ENCODE measurements at regions of chr1 and their contacts with region 1.

Region 1: GRCh38 chr1:77683160-77684148 is 996 bp upstream of the ZZZ3 start:
- DNase-seq: peak; percentile 81 to 94 (median 90)
- H3K4me3 ChIP-seq: peak overlapping the region; percentile 52 to 98 (median 87)
- H3K27ac ChIP-seq: peak overlapping the region; percentile 83 to 100 (median 99)
- H3K27me3 ChIP-seq: no peaks in the 10 kb centered on the region
- CTCF ChIP-seq: peak; percentile 58 to 96 (median 88)

Region 2: GRCh38 chr1:77143529-77144121 is 539.8 kb before region 1 on chr1:
- intact Hi-C with region 1: loop called (anchors 2 kb)
- DNase-seq: no peak
- H3K4me3 ChIP-seq: no peak overlapping the region
- H3K27ac ChIP-seq: no peak overlapping the region
- H3K27me3 ChIP-seq: no peaks in the 10 kb centered on the region
- CTCF ChIP-seq: peak in 54 of 56 donors; percentile 3 to 72 (median 52)

Region 3: DNA sequence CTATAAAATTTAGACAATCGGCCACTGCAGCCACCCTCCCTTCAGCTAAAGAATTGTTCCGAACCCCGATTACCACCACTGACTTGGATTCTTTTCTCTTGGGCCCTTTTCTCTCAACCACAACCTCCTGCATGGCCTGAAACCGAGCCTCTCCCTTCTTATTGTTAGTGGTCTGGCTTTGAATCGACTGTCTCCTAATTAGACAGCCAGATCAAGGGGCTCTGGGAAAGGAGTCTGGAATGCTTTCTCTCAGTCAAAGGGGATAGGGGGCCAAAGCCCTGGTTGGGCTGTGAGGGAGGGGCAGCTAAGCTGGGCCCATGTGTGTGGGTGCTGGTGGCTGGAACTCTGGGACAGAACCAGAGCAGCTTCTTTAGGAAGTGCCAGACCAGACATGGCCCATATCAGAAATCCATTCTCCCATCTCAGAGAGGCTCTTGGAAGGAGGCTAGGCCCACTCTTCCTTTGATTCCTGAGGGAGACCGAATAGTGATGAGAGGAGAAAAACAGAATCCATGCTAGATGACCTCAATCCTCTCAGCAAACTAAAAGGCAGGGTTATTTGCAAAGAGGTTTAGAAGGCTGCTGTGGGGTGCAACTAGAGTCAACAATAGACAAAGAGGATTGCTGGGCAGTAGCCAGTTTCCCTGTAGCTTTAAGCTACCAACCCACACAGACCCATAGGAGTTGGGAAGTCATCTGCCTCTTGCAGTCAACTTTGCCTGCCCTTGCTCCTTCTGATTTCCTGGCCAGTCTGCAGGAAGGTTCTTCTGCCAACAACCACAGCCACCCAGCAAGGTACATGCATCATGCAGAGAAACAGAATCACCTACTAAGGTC is 284.0 kb before region 1 on chr1:
- intact Hi-C with region 1: loop called (anchors 5 kb)
- DNase-seq: peak in 4 of 10 donors; percentile 53 to 72 (median 62)
- H3K4me3 ChIP-seq: peak overlapping the region in 15 of 59 donors; percentile 3 to 31 (median 12)
- H3K27ac ChIP-seq: peak overlapping the region; percentile 81 to 99 (median 93)
- H3K27me3 ChIP-seq: no peaks in the 10 kb centered on the region
- CTCF ChIP-seq: peak in 1 of 56 donors; percentile 15

Region 4: GRCh38 chr1:77533660-77534305 is 149.7 kb before region 1 on chr1:
- intact Hi-C with region 1: loop called (anchors 5 kb)
- DNase-seq: peak in 7 of 10 donors; percentile 18 to 70 (median 63)
- H3K4me3 ChIP-seq: peak overlapping the region in 9 of 59 donors; percentile 0 to 30 (median 11)
- H3K27ac ChIP-seq: peak overlapping the region; percentile 1 to 94 (median 81)
- H3K27me3 ChIP-seq: no peaks in the 10 kb centered on the region
- CTCF ChIP-seq: peak; percentile 81 to 98 (median 90)

Region 5: GRCh38 chr1:77742011-77742555 is 58.6 kb after region 1 on chr1:
- intact Hi-C with region 1: no loop called
- DNase-seq: no peak
- H3K4me3 ChIP-seq: no peak overlapping the region
- H3K27ac ChIP-seq: no peak overlapping the region
- H3K27me3 ChIP-seq: no peaks in the 10 kb centered on the region
- CTCF ChIP-seq: no peak

Region 6: GRCh38 chr1:77759071-77760028 is 75.9 kb after region 1 on chr1 and contains the start of gene USP33:
- intact Hi-C with region 1: loop called in 1 of 2 experiments (anchors 2 kb)
- DNase-seq: peak; percentile 69 to 94 (median 85)
- H3K4me3 ChIP-seq: peak within 1 kb of the TSS; percentile 65 to 100 (median 94)
- H3K27ac ChIP-seq: peak within 1 kb of the TSS in 58 of 59 donors; percentile 19 to 96 (median 86)
- H3K27me3 ChIP-seq: no peaks in the 10 kb centered on the region
- CTCF ChIP-seq: peak in 26 of 56 donors; percentile 4 to 46 (median 24)
- total RNA-seq, gene USP33: 66.3 to 161 (median 125) TPM

Measured in dorsolateral prefrontal cortex (tissue), 120 donors.